Sciatic nerve (tissue), 2 donors: ENCODE measurements at regions of chr1 and their contacts with region 1.

Region 1: DNA sequence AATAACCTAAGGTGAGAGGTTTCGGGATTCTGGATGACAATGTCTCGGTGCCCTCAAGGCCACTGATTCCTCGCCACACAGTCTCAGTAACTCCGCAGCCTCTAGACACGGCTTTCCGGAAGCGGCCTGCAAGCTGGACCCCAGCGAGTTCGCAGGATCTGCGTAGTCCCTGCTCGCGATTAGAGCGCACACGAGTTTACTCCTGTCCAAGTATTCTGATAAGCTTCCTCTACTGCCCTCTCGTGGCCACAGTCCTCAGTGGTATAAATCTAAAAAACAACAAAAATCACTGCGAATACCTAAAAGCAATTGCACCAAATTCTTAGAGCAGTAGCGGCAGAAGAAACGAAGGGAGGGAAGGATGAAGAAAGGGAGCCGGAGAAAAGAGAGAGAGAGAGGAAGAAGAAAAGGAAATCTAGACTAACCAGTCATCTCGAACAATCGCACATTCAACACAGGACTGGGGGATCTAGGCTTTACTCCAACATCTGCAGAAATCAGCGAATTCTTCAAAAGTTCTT is 1.1 kb upstream of the PLXNA2 start:
- DNase-seq: peak; percentile 97
- ATAC-seq: peak; percentile 93

Region 2: GRCh38 chr1:208029381-208030287 is 215.6 kb before region 1 on chr1:
- intact Hi-C with region 1: loop called (anchors 10 kb)
- DNase-seq: peak; percentile 56
- ATAC-seq: peak; percentile 82

Region 3: GRCh38 chr1:208093754-208094719 is 151.2 kb before region 1 on chr1:
- intact Hi-C with region 1: loop called (anchors 10 kb)
- DNase-seq: peak; percentile 85
- ATAC-seq: peak; percentile 72